AG04450 (cell line): ENCODE measurements at regions of chr1 and their contacts with region 1.

Region 1: DNA sequence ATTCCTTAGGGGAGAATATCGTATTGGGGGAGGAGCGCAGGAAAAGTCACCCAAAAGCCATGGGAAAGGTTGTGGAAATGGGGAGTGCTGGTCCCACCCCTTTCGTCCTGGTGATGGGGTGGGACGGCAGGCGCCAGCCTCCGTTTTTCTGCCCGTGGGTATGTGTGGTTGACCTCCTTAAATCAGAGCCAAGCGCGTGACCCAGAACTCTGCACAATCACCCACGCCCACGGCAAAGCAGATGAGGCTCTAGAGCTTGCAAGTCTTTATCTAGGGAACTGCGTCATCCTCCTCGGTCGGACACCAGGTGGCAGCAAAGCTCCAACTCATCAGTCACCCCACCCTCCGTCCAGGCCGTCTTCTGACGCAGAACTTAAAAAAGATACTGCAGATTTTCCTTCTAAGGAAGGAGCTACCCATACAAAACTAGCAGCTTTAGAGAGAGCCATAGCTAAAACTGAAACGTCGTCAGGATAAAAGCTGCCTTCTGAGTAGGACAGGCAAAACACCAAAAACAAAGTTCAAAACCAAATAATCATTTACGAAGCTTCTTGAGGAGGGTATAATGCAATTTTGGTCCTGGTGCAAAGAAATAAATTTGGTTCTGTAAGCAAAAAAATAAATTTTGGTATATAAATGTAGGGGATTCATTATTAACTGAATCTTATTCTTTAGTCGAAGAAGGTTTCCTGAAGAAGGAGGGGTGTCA is 62.0 kb downstream of the TBX19 start:
- DNase-seq: peak; percentile 80
- H3K4me3 ChIP-seq: peak overlapping the region; percentile 27; the same call in 1 of the 2 replicates
- H3K27ac ChIP-seq: no peak overlapping the region
- H3K27me3 ChIP-seq: no peaks in the 10 kb centered on the region
- CTCF ChIP-seq: peak; percentile 75

Region 2: DNA sequence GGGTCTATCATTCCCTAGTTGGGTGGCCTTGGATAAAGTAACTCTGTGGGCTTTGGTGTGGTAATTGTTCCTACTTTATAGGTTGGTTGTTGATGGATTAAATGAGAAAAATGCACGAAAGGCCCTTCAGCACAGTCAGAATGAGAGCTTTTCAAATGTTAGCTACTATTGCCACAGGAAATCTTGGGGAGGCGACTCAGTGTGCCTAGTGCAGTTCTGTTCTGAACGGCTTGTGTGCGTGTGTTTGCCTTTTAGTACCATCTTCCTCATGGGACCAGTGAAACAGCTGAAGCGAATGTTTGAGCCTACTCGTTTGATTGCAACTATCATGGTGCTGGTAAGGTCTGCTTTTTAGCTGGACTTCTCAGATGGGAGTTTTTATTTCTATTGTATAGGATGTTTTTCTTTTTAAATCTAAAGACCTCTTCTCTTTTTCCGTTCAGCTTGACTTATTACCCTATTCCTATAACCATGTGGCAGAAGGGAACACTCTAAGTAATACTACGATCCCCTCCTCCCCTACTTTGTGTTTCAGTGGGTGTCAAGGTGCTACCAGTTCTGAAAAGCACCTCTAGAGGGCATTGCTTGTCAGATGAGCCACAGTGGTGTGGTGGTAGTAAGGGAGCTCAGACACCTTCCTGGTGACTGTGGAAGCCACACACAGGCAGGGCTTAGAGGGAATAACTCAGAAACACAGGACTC is 107.7 kb before region 1 on chr1:
- CTCF ChIA-PET with region 1: interaction called, 37 read pairs
- POLR2A ChIA-PET with region 1: no interaction called
- DNase-seq: no peak
- H3K4me3 ChIP-seq: no peak overlapping the region
- H3K27ac ChIP-seq: no peak overlapping the region
- H3K27me3 ChIP-seq: no peaks in the 10 kb centered on the region
- CTCF ChIP-seq: peak; percentile 64

Region 3: GRCh38 chr1:168321945-168322344 is 20.8 kb before region 1 on chr1:
- CTCF ChIA-PET with region 1: interaction called, 123 read pairs
- POLR2A ChIA-PET with region 1: interaction called, 3 read pairs
- DNase-seq: no peak
- H3K4me3 ChIP-seq: no peak overlapping the region
- H3K27ac ChIP-seq: no peak overlapping the region
- H3K27me3 ChIP-seq: no peaks in the 10 kb centered on the region
- CTCF ChIP-seq: peak; percentile 30; the same call in 1 of the 2 replicates

Region 4: DNA sequence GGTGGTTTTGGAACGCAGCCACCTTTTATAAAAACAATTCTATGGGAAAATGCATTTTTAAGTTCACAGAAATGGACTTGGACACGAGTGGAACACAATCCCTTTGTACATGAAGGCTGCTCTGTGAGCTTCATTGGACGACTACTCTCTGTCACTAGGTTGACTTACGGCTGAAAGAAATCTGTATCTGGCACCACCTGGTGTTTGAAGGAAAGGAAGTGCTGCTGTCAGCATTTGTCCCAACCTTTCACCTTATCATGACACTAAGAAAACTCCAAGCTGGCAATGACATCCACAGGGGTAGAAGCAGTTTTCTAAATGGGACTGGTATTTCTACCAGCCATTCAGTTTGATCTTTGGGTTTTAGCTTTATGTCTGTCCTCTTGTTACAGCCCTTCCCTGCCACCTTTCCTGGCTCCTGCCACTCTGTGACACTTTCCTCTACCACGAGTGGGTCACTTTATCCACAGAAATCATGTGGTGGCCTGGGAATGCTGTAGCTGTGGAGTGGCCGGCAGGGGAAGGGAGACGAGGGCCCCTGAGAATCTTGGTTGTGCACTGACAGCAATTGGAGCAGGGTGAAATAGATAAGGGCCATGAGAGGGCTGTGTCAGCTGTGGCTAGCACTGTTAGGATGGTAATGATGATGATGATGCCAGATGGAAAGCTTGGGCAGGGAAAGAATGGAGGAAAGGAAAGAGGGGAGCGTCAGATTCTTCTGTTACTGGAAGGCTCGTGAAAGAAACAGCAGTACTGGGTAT is 23.2 kb after region 1 on chr1:
- CTCF ChIA-PET with region 1: interaction called, 63 read pairs
- POLR2A ChIA-PET with region 1: no interaction called
- DNase-seq: no peak
- H3K4me3 ChIP-seq: no peak overlapping the region
- H3K27ac ChIP-seq: no peak overlapping the region
- H3K27me3 ChIP-seq: peaks cover 3% of the 10 kb centered on the region
- CTCF ChIP-seq: no peak

Region 5: GRCh38 chr1:168416220-168416619 is 73.5 kb after region 1 on chr1:
- CTCF ChIA-PET with region 1: no interaction called
- POLR2A ChIA-PET with region 1: no interaction called
- DNase-seq: no peak
- H3K4me3 ChIP-seq: no peak overlapping the region
- H3K27ac ChIP-seq: no peak overlapping the region
- H3K27me3 ChIP-seq: no peaks in the 10 kb centered on the region
- CTCF ChIP-seq: no peak

Region 6: DNA sequence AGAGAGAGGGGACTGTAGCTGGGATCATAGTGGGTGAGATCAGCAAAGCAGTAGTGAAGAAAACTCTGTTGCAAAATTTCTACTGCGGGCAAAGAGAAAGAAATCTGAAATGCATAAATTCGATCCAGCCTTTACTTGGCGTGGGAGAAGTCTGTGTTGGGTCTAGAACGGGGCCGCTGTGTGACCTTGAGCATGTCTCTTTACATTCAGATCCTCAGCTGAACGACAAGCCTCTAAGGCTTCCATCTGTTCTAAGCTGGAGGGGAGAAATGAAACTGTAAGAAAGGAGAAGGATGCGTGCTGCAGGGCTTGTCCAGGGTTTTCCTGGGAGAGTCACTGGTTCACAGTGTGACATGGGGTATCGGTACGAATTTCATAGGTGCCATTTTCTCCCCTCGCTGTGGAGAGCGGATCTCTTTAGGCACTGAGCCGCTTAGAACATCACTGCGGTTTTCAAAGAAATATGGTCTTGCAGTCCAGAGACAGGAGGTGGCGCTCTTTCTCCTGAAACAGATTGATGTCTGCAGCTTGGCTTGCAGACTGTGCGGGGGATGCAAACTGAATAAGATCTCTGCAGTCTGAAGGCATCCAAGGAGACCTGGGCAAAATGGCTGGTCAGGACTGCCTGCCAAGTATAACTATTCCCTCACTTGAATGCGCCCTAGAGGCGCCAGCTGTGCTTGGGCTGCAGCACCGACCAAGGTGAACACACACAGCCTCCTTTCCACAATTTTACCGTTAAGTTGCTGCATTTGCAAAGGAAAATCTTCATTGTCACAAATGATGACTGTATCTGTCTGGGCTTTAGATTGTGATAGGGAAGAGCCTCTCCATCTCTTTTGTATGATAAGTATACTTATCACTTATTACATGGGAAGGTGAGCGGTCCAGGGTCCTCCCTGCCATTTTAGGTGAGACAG is 97.0 kb after region 1 on chr1:
- CTCF ChIA-PET with region 1: interaction called, 28 read pairs
- POLR2A ChIA-PET with region 1: no interaction called
- DNase-seq: peak; percentile 73
- H3K4me3 ChIP-seq: peak overlapping the region; percentile 18
- H3K27ac ChIP-seq: no peak overlapping the region
- H3K27me3 ChIP-seq: peaks cover 3% of the 10 kb centered on the region
- CTCF ChIP-seq: peak; percentile 90

Region 7: GRCh38 chr1:169348383-169349036 is 1005.8 kb after region 1 on chr1:
- CTCF ChIA-PET with region 1: interaction called, 24 read pairs
- POLR2A ChIA-PET with region 1: no interaction called
- DNase-seq: peak; percentile 27
- H3K4me3 ChIP-seq: no peak overlapping the region
- H3K27ac ChIP-seq: no peak overlapping the region
- H3K27me3 ChIP-seq: no peaks in the 10 kb centered on the region
- CTCF ChIP-seq: peak; percentile 73